ENCODE measurements at regions of chr6 and their contacts with region 1.

Region 1: DNA sequence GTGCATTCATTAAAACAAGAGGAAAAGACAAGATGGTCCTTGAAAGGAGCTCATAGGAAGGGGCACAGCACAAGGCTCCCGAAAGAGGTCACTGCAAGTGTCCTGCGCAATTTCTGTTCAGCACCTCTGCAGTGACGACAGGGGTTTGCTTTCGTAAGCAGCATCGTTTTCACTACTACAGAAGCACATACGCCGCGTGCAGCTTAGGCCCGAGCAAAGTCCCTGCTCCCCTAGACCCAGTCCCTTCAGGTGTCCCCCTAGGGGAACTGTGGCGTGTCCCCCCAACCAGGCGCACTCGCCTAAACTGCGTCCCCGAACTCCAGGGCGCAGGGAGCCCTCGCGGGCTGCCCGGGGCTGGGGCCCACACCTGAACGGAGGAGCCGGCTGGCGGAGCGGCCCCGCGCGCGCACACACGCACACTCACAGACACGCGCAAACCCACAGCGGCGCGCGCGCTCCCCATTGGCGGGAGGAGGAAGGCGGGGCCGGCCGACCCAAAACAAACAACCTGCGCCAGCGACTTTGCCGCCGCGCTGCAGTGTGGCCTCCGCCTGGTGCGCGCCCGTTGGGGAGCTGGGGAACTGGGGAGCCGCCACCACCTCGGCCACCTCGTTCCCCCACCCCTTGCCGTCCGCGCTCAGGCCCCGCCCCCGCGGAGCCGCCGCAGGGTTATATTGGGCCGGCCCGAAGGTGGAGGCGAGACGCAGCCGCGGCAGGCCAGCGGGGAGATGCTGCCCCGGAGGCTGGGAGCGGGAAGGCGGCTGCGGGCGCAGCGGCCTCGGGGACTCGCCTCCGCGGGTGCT is at the start of gene FOXQ1:
- DNase-seq: peak in 1 of 2 experiments; percentile 66
- ATAC-seq: peak; percentile 68 to 81
- H3K4me3 ChIP-seq: peak within 1 kb of the TSS; percentile 64
- H3K27ac ChIP-seq: peak within 1 kb of the TSS; percentile 79 to 91
- H3K4me1 ChIP-seq: peaks cover 12% of the 10 kb centered on the region
- CTCF ChIP-seq: no peak
- EP300 ChIP-seq: no peak
- POLR2A ChIP-seq: peak; percentile 66
- RAD21 ChIP-seq: peak in 1 of 2 experiments; percentile 27; a peak in 2 of 5 replicates
- polyA plus RNA-seq, gene FOXQ1: 2.1 and 3.5 TPM in 2 replicates

Region 2: GRCh38 chr6:1297746-1298145 is 13.9 kb before region 1 on chr6:
- CTCF ChIA-PET with region 1: interaction called, 23 read pairs
- POLR2A ChIA-PET with region 1: interaction called, 26 read pairs
- DNase-seq: peak; percentile 45 to 47
- ATAC-seq: peak; percentile 70 to 84
- H3K4me3 ChIP-seq: no peak overlapping the region
- H3K27ac ChIP-seq: peak overlapping the region; percentile 82
- H3K4me1 ChIP-seq: peaks cover 35% of the 10 kb centered on the region
- CTCF ChIP-seq: no peak
- EP300 ChIP-seq: peak; percentile 11 to 27; a peak in 1 of 5 replicates
- POLR2A ChIP-seq: no peak
- RAD21 ChIP-seq: 0 out of 5 replicates have a peak, but pooled peaks of 1 of the 2 experiments have one; percentile 20

Region 3: DNA sequence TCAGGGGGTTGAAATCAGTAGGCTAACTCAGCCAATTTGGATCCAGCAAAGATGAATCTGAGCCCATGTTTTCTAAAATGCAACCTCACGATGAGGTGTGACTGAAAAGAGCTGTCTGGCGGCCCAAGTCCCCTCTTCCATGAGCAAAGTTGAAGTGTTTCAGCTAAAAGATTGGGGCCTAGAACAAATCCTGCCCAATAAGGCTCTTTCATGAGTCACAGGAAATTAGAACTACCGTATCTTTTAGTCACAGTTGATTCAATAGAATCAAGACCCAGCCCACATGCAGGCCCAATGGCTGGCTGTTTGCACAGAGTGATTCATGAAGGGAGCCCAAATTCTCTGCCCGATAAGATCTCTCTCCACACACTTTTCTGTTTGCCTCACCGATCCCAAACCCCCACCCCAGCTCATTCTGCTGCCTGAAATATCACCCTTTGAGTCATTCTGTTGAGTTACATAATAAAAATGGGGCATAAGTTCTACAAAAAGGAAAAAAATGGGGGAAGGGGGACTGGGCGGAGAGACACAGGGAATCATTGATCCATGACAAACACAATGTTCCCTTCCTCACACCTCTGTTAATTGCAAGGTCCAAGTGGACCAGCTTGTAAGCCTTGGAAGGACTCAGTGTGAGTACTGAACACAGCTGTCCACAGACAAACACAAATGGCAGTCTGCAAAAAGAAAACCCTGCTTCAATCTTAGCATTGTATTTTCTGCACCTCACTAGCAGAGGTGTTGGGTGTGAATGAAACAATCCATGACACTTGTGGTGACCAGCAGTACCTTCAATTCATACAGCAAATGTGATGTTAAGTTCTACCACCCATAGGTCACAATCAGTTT is 14.1 kb after region 1 on chr6:
- CTCF ChIA-PET with region 1: interaction called, 7 read pairs
- POLR2A ChIA-PET with region 1: interaction called, 20 read pairs
- DNase-seq: peak; percentile 77 to 93
- ATAC-seq: peak; percentile 96
- H3K4me3 ChIP-seq: no peak overlapping the region
- H3K27ac ChIP-seq: peak overlapping the region; percentile 80 to 84
- H3K4me1 ChIP-seq: peaks cover 61% of the 10 kb centered on the region
- CTCF ChIP-seq: no peak
- EP300 ChIP-seq: peak; percentile 77 to 90; a peak in 3 of 5 replicates
- POLR2A ChIP-seq: no peak
- RAD21 ChIP-seq: peak; percentile 19 to 30; a peak in 4 of 5 replicates

Region 4: GRCh38 chr6:1335367-1336037 is 23.9 kb after region 1 on chr6:
- CTCF ChIA-PET with region 1: interaction called, 25 read pairs
- POLR2A ChIA-PET with region 1: interaction called, 10 read pairs
- DNase-seq: peak in 1 of 2 experiments; percentile 77
- ATAC-seq: peak; percentile 89 to 95
- H3K4me3 ChIP-seq: no peak overlapping the region
- H3K27ac ChIP-seq: peak overlapping the region; percentile 73 to 85
- H3K4me1 ChIP-seq: peaks cover 31% of the 10 kb centered on the region
- CTCF ChIP-seq: no peak
- EP300 ChIP-seq: peak; percentile 74 to 76; a peak in 3 of 5 replicates
- POLR2A ChIP-seq: no peak
- RAD21 ChIP-seq: peak; percentile 5 to 55; a peak in 3 of 5 replicates

Region 5: DNA sequence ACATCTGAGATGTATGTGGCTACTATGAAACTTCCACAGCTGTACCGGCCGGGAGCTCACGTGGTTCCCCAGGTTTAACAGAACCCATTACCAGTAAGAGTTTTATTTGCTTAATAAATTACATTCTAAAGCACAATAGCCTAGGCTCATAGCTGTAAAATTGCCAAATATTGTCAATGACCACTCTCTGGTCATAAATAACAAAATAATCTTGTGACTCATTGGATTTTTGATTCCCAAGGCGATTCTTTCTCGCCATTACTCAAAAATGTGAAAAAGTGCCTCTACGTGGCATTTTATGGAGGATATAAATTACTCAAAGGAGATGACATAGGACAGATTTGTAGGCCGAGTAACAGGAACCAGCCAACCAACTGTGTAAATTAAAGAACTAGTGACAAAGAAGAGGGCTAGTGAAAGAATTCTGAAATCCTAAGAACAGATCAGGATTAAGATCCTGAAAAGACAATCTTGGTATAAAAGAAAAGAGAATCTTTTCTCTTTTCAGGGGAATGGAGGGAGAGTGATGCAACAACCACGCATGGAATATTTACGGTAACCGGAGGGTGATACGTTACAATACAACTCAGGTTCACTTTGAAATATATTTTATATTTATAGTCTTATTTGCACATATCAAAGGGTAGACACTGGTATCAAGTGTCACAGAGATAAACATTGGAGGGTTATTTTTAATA is 497.8 kb after region 1 on chr6:
- CTCF ChIA-PET with region 1: no interaction called
- POLR2A ChIA-PET with region 1: no interaction called
- DNase-seq: no peak
- ATAC-seq: no peak
- H3K4me3 ChIP-seq: no peak overlapping the region
- H3K27ac ChIP-seq: no peak overlapping the region
- H3K4me1 ChIP-seq: no peaks in the 10 kb centered on the region
- CTCF ChIP-seq: no peak
- EP300 ChIP-seq: no peak
- POLR2A ChIP-seq: no peak
- RAD21 ChIP-seq: no peak